ENCODE measurements at regions of chr1 and their contacts with region 1.

Region 1: DNA sequence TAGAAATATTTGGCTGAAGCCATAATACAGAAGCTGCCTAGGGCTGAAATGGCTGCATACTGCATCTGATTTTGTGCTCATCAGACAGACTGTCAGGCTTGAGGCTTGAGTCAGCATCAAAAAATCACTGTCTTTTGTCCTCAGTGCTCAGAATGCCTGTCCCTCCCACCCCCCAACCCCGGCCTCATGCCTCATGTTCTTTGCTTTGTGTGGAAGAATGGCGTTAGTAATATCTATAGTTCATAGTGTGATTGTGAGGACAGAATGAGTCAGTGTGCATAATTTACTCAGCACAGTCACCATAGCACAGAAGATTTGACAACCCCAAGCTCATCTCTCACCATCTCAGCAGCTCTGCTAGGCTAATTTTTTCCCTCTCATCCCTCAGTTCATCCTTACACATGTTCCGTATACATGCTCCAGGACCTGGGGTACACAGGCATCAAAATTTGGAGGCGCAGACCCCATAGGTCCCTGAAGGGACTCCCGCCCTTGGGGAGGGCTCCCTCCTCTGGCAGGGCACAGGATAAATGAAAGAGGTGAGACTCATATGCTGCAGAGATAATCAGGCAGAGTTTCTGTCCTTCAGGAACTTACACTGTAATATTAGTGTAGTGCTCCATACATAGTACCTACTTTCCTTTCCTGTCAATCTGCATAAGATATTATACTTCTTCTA is 159.1 kb upstream of the C8B start:
- DNase-seq: no peak

Region 2: DNA sequence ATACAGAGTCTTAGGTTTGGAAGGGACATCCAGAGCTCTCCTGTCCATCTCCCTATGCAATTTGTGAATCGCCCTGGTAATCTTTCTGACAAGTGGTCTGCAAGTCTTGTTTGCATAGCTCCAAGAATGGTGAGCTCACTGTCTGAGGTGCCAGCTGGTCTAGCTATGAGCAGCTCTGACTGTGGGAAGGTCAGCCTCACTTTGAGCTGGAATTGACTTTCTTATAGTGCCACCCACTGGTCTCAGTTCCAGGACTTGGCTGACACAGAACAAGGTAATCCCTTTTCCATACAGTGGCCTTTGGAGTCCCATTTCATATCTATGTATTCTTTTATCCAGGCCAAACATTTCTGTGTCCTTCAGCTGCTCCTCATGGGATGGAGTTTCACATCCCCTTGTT is 63.5 kb before region 1 on chr1:
- intact Hi-C with region 1: loop called in 1 of 2 experiments (anchors 10 kb)
- DNase-seq: no peak